ENCODE measurements at regions of chr6 and their contacts with region 1.

Region 1: DNA sequence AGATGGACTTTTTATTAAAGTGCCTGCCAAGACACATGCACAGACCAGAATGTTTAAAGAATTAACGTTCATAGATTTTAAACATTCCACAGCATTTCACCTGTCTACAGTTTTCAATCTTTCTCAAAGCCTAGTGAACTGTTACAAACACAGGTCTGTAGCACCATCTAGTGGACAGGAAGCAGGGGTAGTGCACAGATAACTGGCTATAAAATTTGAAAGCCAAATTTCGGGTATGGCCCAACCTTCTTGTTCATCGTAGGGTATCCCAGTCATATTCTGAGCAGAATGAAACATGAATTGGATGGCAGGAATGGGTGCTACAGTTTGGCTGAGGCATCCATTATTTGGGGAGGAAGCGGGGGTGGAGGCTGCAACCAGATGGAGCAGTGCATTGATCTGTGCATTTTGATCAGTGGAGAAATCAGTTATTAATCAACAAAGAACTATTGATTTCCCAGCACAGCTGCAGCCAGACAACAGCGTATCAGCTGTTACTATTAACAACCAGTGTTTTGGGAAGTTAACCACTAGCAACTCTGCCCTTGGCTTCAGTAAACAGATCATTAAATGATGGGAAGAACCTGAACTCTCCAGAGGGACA is 56.1 kb upstream of the B3GAT2 start:
- DNase-seq: peak; percentile 13
- ATAC-seq: peak; percentile 76
- H3K4me3 Mint-ChIP-seq: no peak overlapping the region
- H3K27ac Mint-ChIP-seq: no peak overlapping the region
- H3K4me1 Mint-ChIP-seq: no peaks in the 10 kb centered on the region
- H3K27me3 Mint-ChIP-seq: peaks cover 10% of the 10 kb centered on the region

Region 2: GRCh38 chr6:70369332-70369950 is 643.5 kb before region 1 on chr6:
- CTCF ChIA-PET with region 1: interaction called, 5 read pairs
- POLR2A ChIA-PET with region 1: no interaction called
- intact Hi-C with region 1: loop called (anchors 2 to 5 kb)
- DNase-seq: peak; percentile 79
- ATAC-seq: peak; percentile 84
- H3K4me3 Mint-ChIP-seq: no peak overlapping the region
- H3K27ac Mint-ChIP-seq: no peak overlapping the region
- H3K4me1 Mint-ChIP-seq: no peaks in the 10 kb centered on the region
- H3K27me3 Mint-ChIP-seq: peaks cover 12% of the 10 kb centered on the region

Region 3: DNA sequence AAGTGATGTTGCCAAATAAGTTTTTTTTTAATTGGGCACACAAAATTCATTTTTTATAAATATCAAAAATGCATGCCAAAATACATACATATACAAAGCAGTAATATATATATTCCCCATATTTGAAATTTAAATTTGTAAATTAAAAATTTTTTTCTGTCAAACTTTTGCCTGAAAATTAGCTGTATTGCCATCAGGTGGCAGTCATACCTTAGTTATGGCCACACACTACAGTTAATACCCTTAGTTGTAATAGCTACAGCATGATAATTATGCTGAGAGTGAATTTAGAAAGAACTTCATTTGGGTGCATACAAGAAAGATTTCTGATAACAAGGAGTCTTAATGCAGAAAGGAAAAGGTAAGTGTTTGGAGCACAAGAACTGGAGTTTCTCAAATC is 492.4 kb before region 1 on chr6:
- CTCF ChIA-PET with region 1: interaction called, 4 read pairs
- POLR2A ChIA-PET with region 1: no interaction called
- intact Hi-C with region 1: loop called in 1 of 2 experiments (anchors 5 kb)
- DNase-seq: no peak
- ATAC-seq: no peak
- H3K4me3 Mint-ChIP-seq: no peak overlapping the region
- H3K27ac Mint-ChIP-seq: no peak overlapping the region
- H3K4me1 Mint-ChIP-seq: peaks cover 6% of the 10 kb centered on the region
- H3K27me3 Mint-ChIP-seq: no peaks in the 10 kb centered on the region

Region 4: GRCh38 chr6:70706491-70707123 is 306.4 kb before region 1 on chr6:
- CTCF ChIA-PET with region 1: interaction called, 8 read pairs
- POLR2A ChIA-PET with region 1: no interaction called
- intact Hi-C with region 1: loop called (anchors 1 to 2 kb)
- DNase-seq: no peak
- ATAC-seq: no peak
- H3K4me3 Mint-ChIP-seq: no peak overlapping the region
- H3K27ac Mint-ChIP-seq: no peak overlapping the region
- H3K4me1 Mint-ChIP-seq: peaks cover 47% of the 10 kb centered on the region
- H3K27me3 Mint-ChIP-seq: no peaks in the 10 kb centered on the region

Region 5: DNA sequence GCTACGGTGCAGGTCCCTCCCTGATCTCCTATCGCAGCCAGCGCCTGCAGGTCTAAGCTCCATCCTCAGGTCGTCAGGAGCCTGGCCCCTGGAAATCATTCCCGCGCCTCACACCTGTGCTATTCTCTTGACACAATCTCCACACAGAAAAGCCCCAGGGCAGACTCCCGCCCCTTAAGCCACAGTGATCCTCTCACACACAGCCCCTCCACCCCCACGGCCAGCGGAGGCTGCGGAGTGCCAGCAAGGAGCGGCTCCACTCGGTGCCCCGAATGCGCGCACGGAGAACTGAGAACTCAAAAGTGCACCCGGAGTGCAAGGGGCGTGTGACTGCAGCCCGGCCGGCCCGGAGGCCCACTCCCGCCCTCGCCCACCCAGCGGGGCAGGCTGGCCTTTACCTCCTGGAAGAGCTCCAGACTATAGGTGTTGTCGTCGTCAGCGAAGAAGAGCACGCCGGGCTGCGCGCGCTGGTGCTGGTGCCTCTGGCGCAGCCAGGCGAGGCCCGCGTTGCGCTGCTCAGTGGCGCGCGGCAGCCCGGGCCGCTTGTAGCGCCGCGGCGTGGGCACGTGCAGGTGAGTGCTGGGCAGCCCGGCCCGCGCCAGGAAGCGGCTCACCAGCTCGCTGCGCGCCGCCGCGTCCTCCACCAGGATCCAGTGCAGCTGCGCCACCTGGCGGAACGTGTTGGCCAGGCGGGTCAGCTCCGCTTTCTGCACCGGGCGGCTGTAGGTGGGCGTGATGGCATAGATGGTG is 57.4 kb before region 1 on chr6:
- CTCF ChIA-PET with region 1: no interaction called
- POLR2A ChIA-PET with region 1: no interaction called
- intact Hi-C with region 1: loop called in 1 of 2 experiments (anchors 5 kb)
- DNase-seq: peak; percentile 94
- ATAC-seq: peak; percentile 95
- H3K4me3 Mint-ChIP-seq: peak overlapping the region; percentile 64
- H3K27ac Mint-ChIP-seq: no peak overlapping the region
- H3K4me1 Mint-ChIP-seq: peaks cover 14% of the 10 kb centered on the region
- H3K27me3 Mint-ChIP-seq: peaks cover 52% of the 10 kb centered on the region

Region 6: GRCh38 chr6:70980725-70981124 is 32.2 kb before region 1 on chr6:
- CTCF ChIA-PET with region 1: no interaction called
- POLR2A ChIA-PET with region 1: no interaction called
- intact Hi-C with region 1: no loop called
- DNase-seq: no peak
- ATAC-seq: no peak
- H3K4me3 Mint-ChIP-seq: no peak overlapping the region
- H3K27ac Mint-ChIP-seq: no peak overlapping the region
- H3K4me1 Mint-ChIP-seq: no peaks in the 10 kb centered on the region
- H3K27me3 Mint-ChIP-seq: peaks cover 9% of the 10 kb centered on the region

Region 7: DNA sequence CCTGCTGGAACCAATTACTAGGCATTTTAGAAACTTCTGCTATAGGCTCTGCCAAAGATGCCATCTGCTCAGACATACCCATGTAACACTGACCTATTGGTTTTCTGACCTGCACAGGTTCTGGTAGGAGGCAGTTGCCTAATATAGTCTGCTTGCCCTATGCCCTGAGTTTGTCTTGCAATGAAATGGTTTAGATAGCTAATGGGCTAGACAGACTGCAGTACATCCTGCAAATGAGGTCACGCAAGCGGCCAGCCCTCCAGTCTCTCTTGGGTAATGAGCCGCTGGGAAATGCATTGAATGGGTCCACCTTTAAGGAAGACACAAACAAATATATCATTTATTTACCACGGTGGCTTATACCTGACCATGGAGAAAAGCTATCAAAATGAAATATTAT is 34.4 kb after region 1 on chr6:
- CTCF ChIA-PET with region 1: no interaction called
- POLR2A ChIA-PET with region 1: no interaction called
- intact Hi-C with region 1: no loop called
- DNase-seq: no peak
- ATAC-seq: no peak
- H3K4me3 Mint-ChIP-seq: no peak overlapping the region
- H3K27ac Mint-ChIP-seq: no peak overlapping the region
- H3K4me1 Mint-ChIP-seq: no peaks in the 10 kb centered on the region
- H3K27me3 Mint-ChIP-seq: no peaks in the 10 kb centered on the region

Measured in activated CD4-positive, alpha-beta T cell treated with anti-CD3 and anti-CD28 coated beads for 36 hours (primary cell).